ENCODE measurements at regions of chr20 and their contacts with region 1.

Region 1: GRCh38 chr20:52047811-52048764 is 143.5 kb downstream of the ZFP64 start:
- DNase-seq: peak; percentile 81
- H3K4me3 Mint-ChIP-seq: peak overlapping the region; percentile 63
- H3K27ac Mint-ChIP-seq: peak overlapping the region; percentile 85
- H3K4me1 Mint-ChIP-seq: peaks cover 30% of the 10 kb centered on the region
- H3K27me3 Mint-ChIP-seq: peaks cover 4% of the 10 kb centered on the region

Region 2: DNA sequence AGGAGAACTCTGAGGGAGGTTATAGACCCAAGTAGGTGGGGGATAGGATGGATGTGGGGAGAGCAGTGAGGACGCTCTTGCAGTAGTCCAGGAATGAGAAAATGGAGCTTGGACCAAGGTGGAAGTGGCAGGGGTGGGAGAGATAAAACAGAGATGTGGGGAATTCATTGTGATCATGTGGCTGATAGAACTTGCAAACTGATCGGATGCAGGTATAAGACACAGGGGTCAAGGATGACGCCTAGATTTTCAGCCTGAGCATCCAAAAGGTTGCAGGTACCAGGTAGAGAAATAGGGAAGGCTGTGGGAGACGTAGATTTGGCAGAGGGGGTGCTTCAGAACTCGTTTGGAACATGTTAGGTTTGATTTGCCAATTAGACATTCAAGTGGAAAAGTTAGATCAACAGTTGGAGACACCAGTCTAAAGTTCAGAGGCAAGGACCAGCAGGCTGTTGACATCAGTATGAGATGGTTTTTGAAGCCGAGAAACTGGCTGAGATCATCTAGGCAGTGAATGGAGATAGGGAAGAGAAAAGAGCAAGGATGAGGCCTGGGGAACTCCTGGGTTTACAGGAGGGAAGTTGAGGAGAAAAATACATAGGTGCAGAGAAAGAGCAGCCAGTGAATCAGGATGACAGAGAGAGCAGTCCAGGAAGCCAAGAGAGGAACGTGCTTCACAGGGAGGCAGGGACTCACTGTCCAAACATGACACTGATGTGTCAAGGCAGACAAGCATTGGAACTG is 232.9 kb before region 1 on chr20:
- intact Hi-C with region 1: no loop called
- DNase-seq: no peak
- H3K4me3 Mint-ChIP-seq: no peak overlapping the region
- H3K27ac Mint-ChIP-seq: no peak overlapping the region
- H3K4me1 Mint-ChIP-seq: no peaks in the 10 kb centered on the region
- H3K27me3 Mint-ChIP-seq: peaks cover 3% of the 10 kb centered on the region

Region 3: DNA sequence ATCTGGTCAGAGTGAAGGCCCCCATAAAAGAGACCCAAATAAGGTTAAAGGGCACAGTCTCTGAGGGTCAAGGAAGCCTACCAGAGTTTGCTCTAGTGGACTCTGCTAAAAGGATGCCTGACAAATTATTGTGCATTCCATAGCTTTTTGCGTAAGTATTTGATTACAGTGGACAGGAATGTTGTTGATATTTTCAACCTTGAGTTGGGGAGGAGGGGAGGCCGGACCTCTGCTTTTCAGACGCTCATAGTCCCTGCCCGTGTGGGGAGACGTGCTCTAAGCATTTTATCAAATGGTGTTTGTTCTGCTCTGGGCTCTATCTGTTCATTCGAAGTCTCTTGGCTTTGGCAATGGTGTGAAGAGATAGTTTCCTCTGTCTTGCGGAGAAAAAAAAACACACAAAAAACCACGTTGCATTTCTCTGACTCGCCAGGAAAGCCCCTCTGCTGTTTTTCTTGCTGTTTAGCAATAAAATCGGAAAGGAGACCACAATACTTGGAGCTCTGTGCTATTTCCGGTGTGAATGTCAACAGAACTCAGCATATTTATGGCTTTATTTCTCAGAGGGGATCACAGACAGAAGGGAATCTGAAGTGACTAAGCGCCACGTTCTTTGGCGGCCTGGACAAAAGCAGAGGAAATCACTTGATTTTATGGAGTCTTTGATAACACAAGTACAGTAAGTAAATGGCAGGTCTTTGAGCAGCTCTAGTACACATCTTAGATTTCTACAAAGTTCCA is 16.4 kb before region 1 on chr20:
- intact Hi-C with region 1: loop called (anchors 1 kb)
- DNase-seq: peak; percentile 80
- H3K4me3 Mint-ChIP-seq: peak overlapping the region; percentile 25
- H3K27ac Mint-ChIP-seq: peak overlapping the region; percentile 85
- H3K4me1 Mint-ChIP-seq: peaks cover 22% of the 10 kb centered on the region
- H3K27me3 Mint-ChIP-seq: no peaks in the 10 kb centered on the region

Measured in activated CD4-positive, alpha-beta T cell treated with anti-CD3 and anti-CD28 coated beads, Interleukin-2, amount 10 ng/mL, durations not matched to agents 24 days and 14 days (primary cell).